Activated CD4-positive, alpha-beta T cell treated with anti-CD3 and anti-CD28 coated beads, Interleukin-2, amount 10 ng/mL, durations not matched to agents 7 days and 5 days (primary cell): ENCODE measurements at regions of chr19 and their contacts with region 1.

Region 1: GRCh38 chr19:8695501-8695900 is 3.1 kb downstream of the ACTL9 start:
- DNase-seq: no peak
- H3K4me3 Mint-ChIP-seq: no peak overlapping the region
- H3K27ac Mint-ChIP-seq: no peak overlapping the region
- H3K4me1 Mint-ChIP-seq: peaks cover 62% of the 10 kb centered on the region
- H3K27me3 Mint-ChIP-seq: peaks cover 29% of the 10 kb centered on the region

Region 2: DNA sequence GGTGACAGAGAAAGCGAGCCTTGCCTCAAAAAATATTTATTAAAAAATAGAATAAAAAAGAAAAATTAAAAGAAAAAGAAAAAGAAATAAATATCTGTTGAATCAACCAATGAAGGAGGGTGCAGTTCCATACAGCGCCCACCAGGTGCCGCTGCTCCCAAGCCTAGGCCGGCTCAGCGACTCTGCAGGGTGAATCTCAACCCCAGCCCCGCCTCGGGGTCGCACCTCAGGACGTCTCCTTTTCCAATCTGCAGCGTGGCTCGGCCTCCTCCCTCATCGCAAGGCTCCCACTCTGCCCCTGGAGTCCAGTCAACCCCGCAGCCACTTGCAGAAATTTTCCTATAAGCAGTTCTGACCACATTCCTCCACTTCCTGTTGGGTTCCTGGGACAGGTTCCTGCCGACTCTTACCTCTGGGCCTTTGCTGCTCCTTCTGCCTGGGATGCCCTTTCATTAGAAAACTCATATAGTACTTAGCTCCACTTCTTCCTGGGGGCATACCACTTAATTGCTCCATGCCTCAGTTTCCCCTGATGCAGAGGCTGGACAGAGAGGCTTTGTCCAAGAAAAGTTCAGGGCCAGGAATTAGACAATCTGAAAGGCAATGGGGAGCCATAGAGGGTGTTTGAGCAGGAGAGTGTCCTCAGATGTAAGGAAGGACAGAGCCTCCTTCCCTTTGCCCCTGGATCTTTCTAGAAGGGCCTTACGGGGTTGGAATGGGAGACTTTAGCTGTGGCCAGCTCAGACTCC is 40.7 kb before region 1 on chr19:
- CTCF ChIA-PET with region 1: interaction called, 40 read pairs
- POLR2A ChIA-PET with region 1: interaction called, 4 read pairs
- DNase-seq: peak; percentile 71
- H3K4me3 Mint-ChIP-seq: peak overlapping the region; percentile 41
- H3K27ac Mint-ChIP-seq: peak overlapping the region; percentile 31
- H3K4me1 Mint-ChIP-seq: peaks cover 39% of the 10 kb centered on the region
- H3K27me3 Mint-ChIP-seq: peaks cover 11% of the 10 kb centered on the region